Breast epithelium (tissue), 4 donors: ENCODE measurements at regions of chr16 and their contacts with region 1.

Region 1: GRCh38 chr16:49855280-49855821 is 561 bp downstream of the ZNF423 start:
- DNase-seq: peak; percentile 49 to 85
- H3K4me3 ChIP-seq: peak overlapping the region; percentile 76 to 93 (median 80)
- H3K27ac ChIP-seq: peak overlapping the region; percentile 82 to 96
- H3K4me1 ChIP-seq: peaks cover 3 to 4% of the 10 kb centered on the region in 2 donors
- H3K27me3 ChIP-seq: no peaks in the 10 kb centered on the region
- CTCF ChIP-seq: no peak
- POLR2A ChIP-seq: peak; percentile 14

Region 2: DNA sequence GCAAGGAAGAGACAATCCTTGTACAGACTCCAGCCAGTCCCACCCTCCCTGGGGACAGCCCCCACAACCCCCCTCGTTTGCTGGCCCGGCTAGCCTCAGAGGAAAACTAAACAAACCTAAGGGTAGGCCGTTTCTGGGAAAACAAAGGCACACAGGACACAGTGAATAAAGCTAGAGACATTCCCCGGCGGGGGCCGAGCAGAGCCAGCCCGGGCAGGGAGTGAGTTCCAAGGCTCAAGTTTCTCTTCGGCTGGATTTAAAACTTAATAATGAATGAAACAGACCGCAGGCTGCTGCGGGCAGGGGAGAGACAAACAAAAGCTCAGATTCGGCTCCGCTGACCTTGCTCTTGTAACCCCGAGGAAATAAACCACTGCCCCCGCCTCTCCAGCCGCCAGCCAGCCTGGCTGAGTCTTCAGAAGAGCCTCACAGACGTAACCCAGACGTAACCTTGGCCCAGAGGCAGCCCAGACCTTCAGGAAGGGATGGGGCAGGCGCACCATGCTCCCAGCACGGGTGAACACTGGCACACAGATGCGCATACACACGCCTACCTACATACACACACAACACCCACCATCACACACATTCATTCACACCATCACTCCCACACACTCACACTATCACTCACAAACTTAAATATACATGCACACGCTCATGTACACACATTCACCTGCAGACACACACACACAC is 215.5 kb before region 1 on chr16:
- intact Hi-C with region 1: loop called (anchors 5 kb)
- DNase-seq: no peak
- H3K4me3 ChIP-seq: peak overlapping the region in 1 of 3 donors; percentile 37
- H3K27ac ChIP-seq: peak overlapping the region in 1 of 2 donors; percentile 71
- H3K4me1 ChIP-seq: no peaks in the 10 kb centered on the region
- H3K27me3 ChIP-seq: no peaks in the 10 kb centered on the region
- CTCF ChIP-seq: no peak
- POLR2A ChIP-seq: no peak

Region 3: DNA sequence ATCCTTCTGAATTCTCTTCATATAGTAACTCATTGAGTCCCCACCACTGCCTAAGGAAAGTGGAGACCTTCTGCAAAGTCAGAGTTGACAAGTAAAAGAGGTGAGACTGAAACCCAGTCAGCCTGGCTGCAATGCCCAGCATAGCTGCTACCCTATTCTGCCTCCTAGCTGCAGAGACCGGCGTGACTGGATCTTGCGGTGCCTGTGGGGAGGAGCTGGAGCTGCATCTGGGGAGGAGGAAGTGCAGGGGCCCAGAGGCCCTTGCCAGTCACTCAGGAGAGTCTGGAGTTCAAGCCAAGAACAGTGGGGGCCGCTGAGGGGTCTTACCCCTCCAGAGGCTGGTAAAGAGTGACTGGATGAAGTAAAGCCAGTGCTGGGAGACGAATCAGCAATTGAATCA is 35.5 kb after region 1 on chr16:
- intact Hi-C with region 1: loop called (anchors 1 kb)
- DNase-seq: no peak
- H3K4me3 ChIP-seq: no peak overlapping the region
- H3K27ac ChIP-seq: no peak overlapping the region
- H3K4me1 ChIP-seq: no peaks in the 10 kb centered on the region
- H3K27me3 ChIP-seq: no peaks in the 10 kb centered on the region
- CTCF ChIP-seq: no peak
- POLR2A ChIP-seq: no peak

Region 4: DNA sequence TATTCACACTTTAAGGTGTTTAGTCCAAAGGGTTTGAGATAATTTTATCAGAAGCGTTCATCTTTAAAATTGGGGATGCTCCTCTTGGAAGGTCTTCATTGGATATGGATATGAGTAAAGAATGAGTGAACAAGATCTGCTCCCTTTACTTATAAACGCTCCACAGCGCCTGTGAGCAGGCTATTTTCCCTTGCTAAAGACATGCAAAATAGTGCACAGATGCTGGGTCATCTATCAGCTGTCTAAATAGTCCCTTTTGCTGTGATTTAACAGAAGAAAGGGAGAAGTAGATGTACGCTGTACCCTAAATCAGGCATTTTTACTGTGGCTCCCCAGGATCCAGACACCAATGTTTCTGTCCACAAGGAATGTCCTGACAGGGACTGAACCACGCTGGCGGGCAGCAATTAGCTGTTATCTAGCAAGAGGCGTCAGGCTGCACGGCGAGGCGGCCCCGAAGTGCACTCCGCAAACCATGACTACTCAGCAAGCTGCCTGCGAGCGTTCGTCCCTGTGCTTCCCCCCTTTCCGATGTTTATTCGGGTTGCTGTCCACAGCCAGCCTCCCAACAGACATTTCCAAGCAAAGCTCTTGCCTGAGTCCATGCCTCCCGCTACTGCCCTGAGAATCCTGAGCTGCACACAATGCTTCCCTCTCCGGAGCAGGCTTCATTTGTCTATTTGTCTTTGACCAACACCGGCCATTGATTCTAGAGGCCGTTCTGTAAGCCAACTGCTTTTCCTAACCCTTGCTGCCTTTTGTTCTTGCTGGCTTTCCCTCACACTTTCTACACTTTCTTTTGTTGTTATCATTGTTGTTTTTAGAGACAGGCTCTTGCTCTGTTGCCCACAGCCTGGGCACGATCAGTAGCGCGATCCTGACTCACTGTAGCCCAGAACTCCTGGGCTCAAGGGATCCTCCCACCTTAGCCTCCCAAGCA is 114.0 kb after region 1 on chr16:
- intact Hi-C with region 1: no loop called
- DNase-seq: no peak
- H3K4me3 ChIP-seq: no peak overlapping the region
- H3K27ac ChIP-seq: no peak overlapping the region
- H3K4me1 ChIP-seq: no peaks in the 10 kb centered on the region
- H3K27me3 ChIP-seq: no peaks in the 10 kb centered on the region
- CTCF ChIP-seq: no peak
- POLR2A ChIP-seq: no peak

Region 5: DNA sequence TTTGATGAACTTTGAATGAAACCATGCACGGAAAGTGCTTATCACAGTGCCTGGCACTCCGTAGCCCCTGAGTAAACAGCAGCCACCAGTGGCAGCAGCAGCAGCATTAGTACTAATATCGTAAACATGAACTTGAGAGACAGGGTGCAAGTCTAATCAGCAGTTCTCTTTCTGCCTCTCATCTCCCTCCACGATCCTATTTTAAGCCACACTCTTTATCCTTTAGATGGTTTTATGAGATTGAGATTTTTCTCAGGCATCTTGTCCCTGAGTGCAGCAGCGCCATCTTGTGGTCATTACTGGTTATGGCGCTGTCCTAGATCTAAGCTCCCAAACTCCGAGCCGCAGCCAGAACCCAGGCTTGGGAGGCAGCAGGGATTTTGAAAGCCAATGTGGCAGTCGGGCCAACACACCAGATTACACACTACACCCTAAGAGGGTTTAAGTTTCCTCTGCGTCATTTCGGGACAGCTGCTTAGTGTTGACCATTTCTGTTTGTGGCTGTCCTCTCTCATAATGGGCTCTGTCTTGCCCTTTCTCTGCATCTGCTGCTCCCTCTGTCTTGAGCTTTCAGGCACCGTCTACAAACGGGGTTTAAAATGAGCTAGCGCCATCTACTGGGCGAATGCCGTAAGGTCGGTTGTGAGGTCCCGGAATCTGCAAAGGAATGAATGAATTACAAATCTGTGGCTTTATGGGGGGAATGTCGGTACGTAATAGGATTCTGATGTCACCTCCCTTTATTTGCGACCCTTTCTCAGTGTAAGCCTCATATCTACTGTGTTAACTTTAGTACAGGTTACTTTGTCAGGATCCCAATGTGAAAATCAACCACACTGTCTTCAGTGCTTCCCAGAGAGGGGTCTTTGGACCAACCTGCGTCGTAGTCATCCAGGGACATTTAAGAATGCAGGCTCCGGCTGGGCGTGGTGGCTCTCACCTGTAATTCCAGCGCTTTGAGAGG is 951.0 kb after region 1 on chr16:
- intact Hi-C with region 1: no loop called
- DNase-seq: peak; percentile 75 to 82
- H3K4me3 ChIP-seq: peak overlapping the region; percentile 8 to 48 (median 37)
- H3K27ac ChIP-seq: peak overlapping the region; percentile 29 to 31
- H3K4me1 ChIP-seq: no peaks in the 10 kb centered on the region
- H3K27me3 ChIP-seq: no peaks in the 10 kb centered on the region
- CTCF ChIP-seq: peak; percentile 51 to 93 (median 86)
- POLR2A ChIP-seq: no peak